Caco-2 (cell line): ENCODE measurements at regions of chr7 and their contacts with region 1.

Region 1: DNA sequence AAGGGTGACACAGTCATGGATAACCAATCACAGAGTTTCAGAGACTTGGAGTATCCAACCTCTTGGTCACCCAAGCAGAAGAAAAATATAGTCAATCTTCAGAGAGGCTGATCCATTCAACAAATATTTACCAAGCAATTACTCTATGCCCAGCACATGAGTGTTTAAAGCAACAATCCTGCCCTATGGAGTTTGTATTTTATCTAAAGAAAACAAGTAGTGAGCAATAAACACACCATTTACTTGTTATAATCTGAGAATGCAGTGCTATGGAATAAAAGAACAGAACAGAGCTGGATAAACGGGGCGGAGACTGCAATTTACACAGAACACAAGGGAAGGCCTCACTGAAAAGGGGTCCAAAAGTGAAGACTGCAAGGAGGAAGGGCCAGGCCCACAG is 63.8 kb downstream of the GRB10 start:
- DNase-seq: peak in 1 of 2 experiments; percentile 29
- H3K4me3 ChIP-seq: no peak overlapping the region
- H3K4me3 Mint-ChIP-seq: peak overlapping the region; percentile 5
- H3K27ac Mint-ChIP-seq: peak overlapping the region; percentile 8
- H3K4me1 ChIP-seq: peaks cover 29% of the 10 kb centered on the region
- H3K4me1 Mint-ChIP-seq: peaks cover 25% of the 10 kb centered on the region
- H3K27me3 ChIP-seq: no peaks in the 10 kb centered on the region
- H3K27me3 Mint-ChIP-seq: no peaks in the 10 kb centered on the region
- CTCF ChIP-seq: no peak

Region 2: DNA sequence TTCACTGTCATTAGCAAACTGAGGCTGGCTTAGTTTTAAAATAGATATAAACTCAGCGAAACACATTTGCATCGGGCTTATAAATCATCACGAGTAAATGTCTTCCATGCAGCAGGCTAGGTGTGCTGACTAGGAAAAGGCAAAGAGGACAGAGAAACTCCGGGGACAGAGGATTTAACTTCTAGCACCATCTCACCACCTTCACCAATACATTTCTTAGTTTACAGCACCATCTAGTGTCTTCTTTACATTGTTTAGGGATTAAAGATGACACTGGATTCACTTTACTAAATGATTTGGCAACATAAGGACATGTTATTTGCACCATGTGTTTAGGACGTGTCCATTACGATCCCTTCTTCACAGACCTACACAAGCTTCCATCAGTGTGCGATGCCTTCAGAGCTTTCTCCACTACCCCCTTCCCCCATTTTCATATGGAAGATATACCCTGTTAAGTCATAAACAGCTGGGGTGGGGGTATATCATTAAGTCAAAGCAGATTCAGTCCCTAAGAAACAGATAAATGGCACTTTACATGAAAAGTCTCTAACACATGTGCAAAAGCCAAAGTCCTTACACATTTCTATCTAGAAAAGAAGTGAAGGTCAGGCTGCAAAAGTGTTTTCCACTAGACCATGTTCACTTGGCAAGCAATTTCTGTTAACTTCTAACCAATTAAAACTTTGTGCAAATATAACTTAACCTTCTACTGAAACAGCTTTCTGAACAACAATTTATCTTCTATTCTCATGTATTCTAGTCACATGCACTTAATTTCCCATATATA is 39.5 kb before region 1 on chr7:
- CTCF ChIA-PET with region 1: no interaction called
- POLR2A ChIA-PET with region 1: no interaction called
- intact Hi-C with region 1: no loop called
- DNase-seq: peak in 1 of 2 experiments; percentile 22
- H3K4me3 ChIP-seq: no peak overlapping the region
- H3K4me3 Mint-ChIP-seq: no peak overlapping the region
- H3K27ac Mint-ChIP-seq: no peak overlapping the region
- H3K4me1 ChIP-seq: no peaks in the 10 kb centered on the region
- H3K4me1 Mint-ChIP-seq: no peaks in the 10 kb centered on the region
- H3K27me3 ChIP-seq: no peaks in the 10 kb centered on the region
- H3K27me3 Mint-ChIP-seq: no peaks in the 10 kb centered on the region
- CTCF ChIP-seq: peak in 1 of 2 experiments; percentile 15

Region 3: GRCh38 chr7:50733555-50733954 is 14.7 kb after region 1 on chr7:
- CTCF ChIA-PET with region 1: no interaction called
- POLR2A ChIA-PET with region 1: no interaction called
- intact Hi-C with region 1: loop called (anchors 1 kb)
- DNase-seq: peak; percentile 73 to 82
- H3K4me3 ChIP-seq: no peak overlapping the region
- H3K4me3 Mint-ChIP-seq: no peak overlapping the region
- H3K27ac Mint-ChIP-seq: peak overlapping the region; percentile 92
- H3K4me1 ChIP-seq: peaks cover 24% of the 10 kb centered on the region
- H3K4me1 Mint-ChIP-seq: peaks cover 39% of the 10 kb centered on the region
- H3K27me3 ChIP-seq: no peaks in the 10 kb centered on the region
- H3K27me3 Mint-ChIP-seq: no peaks in the 10 kb centered on the region
- CTCF ChIP-seq: no peak